HepG2 (cell line): ENCODE measurements at regions of chr7 and their contacts with region 1.

Region 1: DNA sequence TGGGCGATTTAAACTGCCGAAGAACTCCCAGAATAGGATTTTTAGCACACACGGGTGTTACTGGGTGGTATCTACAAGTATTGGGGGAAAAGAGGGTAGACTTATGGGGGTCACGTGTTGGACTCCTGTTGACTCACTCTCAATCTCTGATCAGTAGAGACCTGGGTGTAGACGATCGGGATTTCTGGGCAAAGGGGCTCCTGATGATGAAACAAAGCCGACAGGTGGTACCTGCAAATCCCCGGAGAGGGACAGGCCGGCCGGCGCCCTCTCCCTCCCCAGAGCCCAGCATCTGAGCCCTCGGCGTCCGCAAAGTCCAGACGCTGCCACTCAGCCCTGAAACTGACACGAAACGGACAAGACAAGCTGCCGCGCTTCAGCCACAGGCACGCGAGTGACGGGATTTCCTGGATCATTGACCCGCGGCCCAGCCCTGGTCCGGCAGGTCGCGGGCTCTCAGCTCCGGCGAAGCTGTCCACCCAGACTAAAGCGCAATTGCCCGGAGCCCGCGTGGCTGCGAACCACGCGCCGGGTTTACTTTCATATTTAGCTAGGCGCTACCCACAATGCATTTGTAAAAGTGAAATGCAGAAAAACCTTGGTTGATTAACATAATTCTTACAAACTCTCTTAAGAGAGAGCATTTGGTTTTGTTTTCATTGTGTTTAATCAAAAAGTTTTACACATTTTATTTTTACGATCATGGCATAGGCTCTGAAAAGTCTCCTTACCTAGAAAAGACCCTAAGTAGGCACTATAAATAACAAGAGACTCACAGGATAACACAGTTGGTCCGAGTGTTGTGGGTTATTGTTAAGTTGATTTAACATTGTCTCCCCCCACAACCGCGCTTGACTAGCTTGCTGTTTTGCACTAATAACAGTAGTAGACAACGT is 56.9 kb upstream of the EZH2 start:
- DNase-seq: peak; percentile 72
- ATAC-seq: peak; percentile 87
- H3K4me3 ChIP-seq: peak overlapping the region; percentile 81 to 91 (median 88)
- H3K27ac ChIP-seq: peak overlapping the region; percentile 84
- H3K4me1 ChIP-seq: peaks cover 16% of the 10 kb centered on the region; the same call in 1 of the 2 replicates
- H3K27me3 ChIP-seq: no peaks in the 10 kb centered on the region; a peak in 1 of 5 replicates
- CTCF ChIP-seq: no peak
- EP300 ChIP-seq: no peak
- POLR2A ChIP-seq: peak; percentile 62 to 70
- RAD21 ChIP-seq: no peak

Region 2: DNA sequence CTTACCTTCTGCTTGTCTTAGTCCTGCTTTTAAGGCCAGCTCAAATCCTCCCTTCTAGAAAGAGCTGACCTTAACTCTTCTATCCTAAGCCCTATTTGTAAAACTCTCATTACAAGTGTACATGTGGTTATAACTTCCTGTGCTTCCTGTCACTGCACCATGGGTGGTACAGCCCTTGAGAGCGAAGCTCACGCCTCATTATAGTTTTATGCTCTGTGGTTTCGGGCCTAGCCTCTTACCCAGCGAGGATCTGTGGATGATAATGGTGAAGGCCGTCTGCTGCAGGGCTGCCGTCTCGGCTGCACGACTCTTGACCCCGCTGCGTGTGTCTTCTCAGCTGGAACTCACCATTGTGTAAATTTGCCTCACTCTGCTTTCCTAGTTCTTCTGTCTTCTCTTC is 167.6 kb before region 1 on chr7:
- CTCF ChIA-PET with region 1: no interaction called
- POLR2A ChIA-PET with region 1: no interaction called
- in situ Hi-C with region 1: no loop called
- intact Hi-C with region 1: no loop called
- DNase-seq: no peak
- ATAC-seq: no peak
- H3K4me3 ChIP-seq: no peak overlapping the region
- H3K27ac ChIP-seq: no peak overlapping the region
- H3K4me1 ChIP-seq: no peaks in the 10 kb centered on the region
- H3K27me3 ChIP-seq: no peaks in the 10 kb centered on the region
- CTCF ChIP-seq: no peak
- EP300 ChIP-seq: no peak
- POLR2A ChIP-seq: no peak
- RAD21 ChIP-seq: no peak

Region 3: DNA sequence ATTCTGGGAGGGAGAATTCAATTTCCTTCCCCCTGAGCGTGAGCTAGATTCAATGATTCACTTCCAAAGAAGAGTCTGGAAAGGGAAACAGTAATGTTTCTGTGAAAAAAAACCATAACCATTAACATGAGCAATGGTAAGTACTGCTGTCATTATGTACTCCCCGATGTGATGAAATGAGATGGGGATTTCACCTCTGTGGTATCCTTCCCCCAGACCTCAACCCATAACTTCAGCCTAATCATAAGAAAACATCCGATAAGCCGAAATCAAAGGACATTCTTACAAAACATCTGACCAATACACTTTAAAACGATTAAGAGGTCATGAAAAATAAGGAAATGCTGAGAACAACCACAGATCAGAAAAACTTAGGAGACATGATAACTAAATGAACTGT is 84.1 kb before region 1 on chr7:
- CTCF ChIA-PET with region 1: interaction called, 3 read pairs
- POLR2A ChIA-PET with region 1: no interaction called
- in situ Hi-C with region 1: no loop called
- intact Hi-C with region 1: loop called (anchors 1 kb)
- DNase-seq: no peak
- ATAC-seq: no peak
- H3K4me3 ChIP-seq: no peak overlapping the region
- H3K27ac ChIP-seq: no peak overlapping the region
- H3K4me1 ChIP-seq: peaks cover 11% of the 10 kb centered on the region
- H3K27me3 ChIP-seq: no peaks in the 10 kb centered on the region
- CTCF ChIP-seq: no peak
- EP300 ChIP-seq: no peak
- POLR2A ChIP-seq: no peak
- RAD21 ChIP-seq: no peak

Region 4: DNA sequence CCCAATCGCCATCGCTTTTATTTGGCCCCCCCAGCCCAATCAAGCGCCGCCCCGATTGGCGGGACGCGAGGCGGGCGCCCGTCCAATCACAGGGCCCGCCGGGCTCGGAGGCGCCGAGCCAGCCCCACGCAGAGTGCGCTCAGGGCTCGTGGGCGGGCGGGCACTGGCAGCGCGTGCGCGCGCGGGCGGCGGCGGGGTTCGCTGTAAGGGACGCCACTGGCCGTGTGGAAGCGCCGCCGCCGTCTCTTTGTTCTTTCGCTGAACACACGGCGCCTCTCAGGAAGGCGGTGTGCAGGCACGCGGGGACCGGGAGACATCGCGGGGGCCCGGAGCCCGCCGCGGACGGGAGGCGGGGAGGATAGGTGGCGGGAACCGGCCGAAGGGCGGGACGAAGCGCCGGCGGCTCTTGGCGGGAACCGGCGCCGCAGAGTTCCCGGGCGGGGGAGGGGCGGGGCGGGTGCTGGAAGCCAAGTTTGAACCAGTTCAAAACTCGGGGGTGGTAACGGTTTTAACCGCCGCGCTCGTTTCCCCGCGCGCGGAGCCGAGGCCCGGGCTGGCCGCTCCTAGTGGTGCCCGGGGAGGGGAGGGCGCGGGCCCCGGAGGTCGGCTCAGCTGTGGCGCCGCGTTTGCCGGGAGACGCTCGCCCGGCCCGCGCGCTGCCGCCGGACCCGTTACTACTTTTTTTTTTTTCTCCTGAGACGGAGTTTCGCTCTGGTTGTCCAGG is 56.5 kb before region 1 on chr7:
- CTCF ChIA-PET with region 1: no interaction called
- POLR2A ChIA-PET with region 1: interaction called, 6 read pairs
- in situ Hi-C with region 1: no loop called
- intact Hi-C with region 1: loop called (anchors 2 kb)
- DNase-seq: peak; percentile 80
- ATAC-seq: peak; percentile 97
- H3K4me3 ChIP-seq: peak overlapping the region; percentile 87 to 99 (median 98)
- H3K27ac ChIP-seq: peak overlapping the region; percentile 95
- H3K4me1 ChIP-seq: peaks cover 29% of the 10 kb centered on the region
- H3K27me3 ChIP-seq: no peaks in the 10 kb centered on the region
- CTCF ChIP-seq: no peak
- EP300 ChIP-seq: peak in 1 of 2 experiments; percentile 15; a peak in 1 of 4 replicates
- POLR2A ChIP-seq: peak; percentile 55 to 85; a peak in 3 of 4 replicates
- RAD21 ChIP-seq: peak; percentile 21